ENCODE measurements at regions of chr7 and their contacts with region 1.

Region 1: DNA sequence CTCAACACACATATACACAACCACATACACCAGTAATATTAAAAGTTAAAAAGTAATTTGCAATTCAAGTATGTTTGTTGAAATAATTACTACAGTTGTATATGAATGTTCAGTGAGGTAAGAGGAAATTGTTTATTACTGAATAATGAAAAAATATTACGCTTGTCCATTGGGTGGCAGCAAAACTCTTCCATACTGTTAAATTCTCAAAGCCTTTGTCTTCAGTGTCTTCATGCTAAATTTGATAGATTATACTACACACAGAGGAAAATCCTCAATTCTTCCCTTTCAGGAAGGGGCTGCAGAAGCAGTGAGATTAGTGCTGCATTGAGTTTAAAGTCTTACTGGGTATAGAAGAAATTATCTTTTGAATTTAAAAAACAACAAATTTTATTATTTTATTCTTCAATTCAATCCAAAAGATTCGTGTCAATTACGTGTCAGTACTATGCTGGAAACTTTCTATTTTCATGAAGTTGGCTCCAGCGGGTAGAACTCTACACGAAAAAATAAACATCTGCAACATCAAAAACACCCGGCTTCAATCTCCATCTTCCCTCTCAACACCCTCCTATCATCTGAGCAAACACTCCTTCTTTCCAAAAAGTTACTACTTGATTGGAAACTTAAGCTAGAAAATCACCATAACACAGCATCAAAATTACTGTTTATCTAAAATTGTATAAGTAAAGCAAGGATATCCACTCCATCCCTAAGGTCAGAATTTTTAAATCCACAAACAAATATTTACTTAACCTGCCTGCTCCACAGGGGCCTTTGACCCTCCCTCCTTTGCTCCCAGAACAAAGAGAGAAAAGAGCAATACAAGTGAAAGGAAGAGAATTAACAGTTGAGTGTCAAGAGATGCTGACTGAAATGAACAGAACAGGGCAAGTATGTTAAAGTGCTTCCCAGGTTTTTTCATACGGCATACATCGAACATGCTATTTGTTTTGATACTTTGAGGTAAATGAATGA is 37.0 kb upstream of the TES start:
- DNase-seq: peak; percentile 78
- H3K4me3 Mint-ChIP-seq: no peak overlapping the region
- H3K27ac Mint-ChIP-seq: no peak overlapping the region
- H3K4me1 Mint-ChIP-seq: peaks cover 4% of the 10 kb centered on the region
- H3K27me3 Mint-ChIP-seq: peaks cover 28% of the 10 kb centered on the region

Region 2: GRCh38 chr7:115971506-115971905 is 201.8 kb before region 1 on chr7:
- intact Hi-C with region 1: no loop called
- DNase-seq: no peak
- H3K4me3 Mint-ChIP-seq: no peak overlapping the region
- H3K27ac Mint-ChIP-seq: no peak overlapping the region
- H3K4me1 Mint-ChIP-seq: no peaks in the 10 kb centered on the region
- H3K27me3 Mint-ChIP-seq: no peaks in the 10 kb centered on the region

Region 3: DNA sequence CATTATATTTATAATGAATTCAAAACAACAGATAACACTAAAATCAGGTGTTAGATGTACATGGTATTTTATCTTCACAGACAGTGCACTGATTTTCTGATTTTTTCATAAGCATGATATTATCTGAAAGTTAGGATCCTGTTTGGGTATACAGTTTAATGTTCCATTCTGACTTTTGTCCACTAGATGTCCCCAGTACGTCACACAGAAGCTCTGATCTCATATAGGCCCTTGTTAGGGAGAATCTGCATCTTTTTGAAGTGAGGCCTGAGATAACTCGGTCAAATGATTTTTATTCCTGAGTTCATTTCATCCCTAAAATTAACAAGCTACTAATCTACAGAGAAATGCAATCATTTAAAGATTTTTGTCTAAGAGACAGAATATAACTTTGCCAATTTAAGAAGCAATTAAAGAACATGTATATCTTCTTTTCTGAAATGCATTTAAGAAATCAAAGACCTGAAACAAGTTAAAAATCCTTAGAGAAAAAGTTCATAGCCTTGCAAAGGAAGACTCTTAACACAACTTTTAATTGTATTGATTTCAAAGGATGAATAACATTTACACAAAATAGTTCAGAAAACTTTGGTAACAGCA is 35.0 kb before region 1 on chr7:
- intact Hi-C with region 1: loop called (anchors 5 kb)
- DNase-seq: peak; percentile 80
- H3K4me3 Mint-ChIP-seq: no peak overlapping the region
- H3K27ac Mint-ChIP-seq: no peak overlapping the region
- H3K4me1 Mint-ChIP-seq: peaks cover 11% of the 10 kb centered on the region
- H3K27me3 Mint-ChIP-seq: peaks cover 16% of the 10 kb centered on the region

Region 4: DNA sequence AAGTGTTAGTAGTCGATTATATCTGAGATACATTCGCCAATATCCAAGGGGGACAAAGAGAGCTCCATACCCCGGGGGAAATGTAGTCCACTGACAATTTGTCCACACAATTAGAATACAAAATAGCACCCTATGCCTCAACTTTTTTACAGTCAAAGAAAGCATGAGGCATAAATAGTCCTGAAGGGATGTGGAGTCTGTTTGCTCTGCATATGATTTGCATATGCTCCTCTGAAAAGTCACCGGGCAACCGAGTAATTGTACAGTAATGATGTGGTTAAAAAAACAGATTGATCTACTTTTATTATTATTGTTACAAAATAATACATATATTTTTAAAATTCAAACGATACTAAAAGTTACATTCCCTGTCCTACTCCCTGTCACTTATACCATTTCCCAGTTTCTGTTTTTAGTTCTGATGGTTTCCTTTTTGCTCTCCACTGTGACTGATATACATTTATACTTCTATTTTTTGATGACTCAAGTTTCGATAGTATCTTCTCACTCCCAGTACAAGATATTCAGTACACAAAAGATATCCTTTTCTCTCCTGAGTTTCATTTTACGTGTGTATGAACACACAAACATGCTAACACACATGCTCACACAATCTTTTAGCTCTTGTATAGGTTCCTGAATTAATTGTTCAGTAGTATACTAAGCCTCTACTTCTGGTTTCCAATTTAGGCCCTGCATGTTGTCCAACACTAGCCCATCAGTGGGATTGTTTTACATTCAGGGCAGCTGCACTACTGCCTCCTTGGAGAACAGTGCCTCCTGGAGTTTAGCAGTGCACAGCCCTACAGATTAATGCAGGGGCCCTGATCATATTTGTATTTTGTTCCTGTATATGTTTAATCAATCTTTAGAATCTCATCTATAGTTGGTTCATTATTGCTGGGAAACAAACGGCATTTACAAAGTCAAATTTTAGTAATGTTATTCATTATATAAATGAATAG is 167.9 kb after region 1 on chr7:
- intact Hi-C with region 1: loop called (anchors 10 kb)
- DNase-seq: no peak
- H3K4me3 Mint-ChIP-seq: no peak overlapping the region
- H3K27ac Mint-ChIP-seq: no peak overlapping the region
- H3K4me1 Mint-ChIP-seq: no peaks in the 10 kb centered on the region
- H3K27me3 Mint-ChIP-seq: peaks cover 19% of the 10 kb centered on the region

Region 5: DNA sequence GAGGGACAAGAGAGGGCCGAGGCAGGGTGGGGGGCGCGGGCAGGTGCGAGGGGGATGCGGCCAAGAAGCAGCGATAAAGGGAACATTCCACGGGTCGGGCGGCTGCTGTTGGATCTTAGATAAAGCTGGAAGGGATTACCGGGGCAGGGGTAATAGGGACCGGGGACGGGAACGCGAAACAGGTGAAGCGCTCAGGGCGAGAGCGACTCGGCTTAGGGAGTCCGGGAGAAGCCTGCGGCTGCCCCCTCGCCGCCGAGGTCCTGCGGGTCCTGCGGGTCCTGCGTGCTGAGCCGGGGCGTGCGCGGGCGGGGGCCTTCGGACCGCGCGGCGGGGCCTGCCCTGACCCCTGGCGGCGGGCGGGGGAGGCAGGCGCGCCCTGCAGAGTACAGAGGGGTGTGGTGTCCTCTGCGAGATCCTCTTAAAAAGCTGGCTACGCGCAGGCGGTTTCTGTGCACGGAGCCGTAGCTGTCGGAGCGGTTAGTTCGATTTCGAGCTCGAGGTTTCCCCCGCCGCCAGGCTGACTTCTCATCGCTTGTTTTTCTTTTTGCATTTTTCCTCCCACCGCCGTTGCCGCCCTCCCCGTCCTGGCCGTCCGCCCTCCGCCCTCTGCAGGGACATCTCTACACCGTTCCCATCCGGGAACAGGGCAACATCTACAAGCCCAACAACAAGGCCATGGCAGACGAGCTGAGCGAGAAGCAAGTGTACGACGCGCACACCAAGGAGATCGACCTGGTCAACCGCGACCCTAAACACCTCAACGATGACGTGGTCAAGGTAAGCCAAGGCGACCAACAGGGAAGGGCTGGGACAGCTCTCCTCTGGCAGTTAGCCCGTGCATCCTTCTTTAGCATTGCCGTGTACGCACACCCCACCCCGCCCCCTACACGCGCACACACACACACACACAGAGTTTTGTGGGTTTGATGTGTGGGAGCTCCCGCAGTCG is 352.8 kb after region 1 on chr7:
- intact Hi-C with region 1: loop called (anchors 5 kb)
- DNase-seq: peak; percentile 89
- H3K4me3 Mint-ChIP-seq: peak overlapping the region; percentile 88
- H3K27ac Mint-ChIP-seq: peak overlapping the region; percentile 67
- H3K4me1 Mint-ChIP-seq: peaks cover 27% of the 10 kb centered on the region
- H3K27me3 Mint-ChIP-seq: peaks cover 81% of the 10 kb centered on the region

Region 6: GRCh38 chr7:116809636-116810266 is 636.4 kb after region 1 on chr7:
- intact Hi-C with region 1: loop called (anchors 2 kb)
- DNase-seq: peak; percentile 71
- H3K4me3 Mint-ChIP-seq: no peak overlapping the region
- H3K27ac Mint-ChIP-seq: no peak overlapping the region
- H3K4me1 Mint-ChIP-seq: no peaks in the 10 kb centered on the region
- H3K27me3 Mint-ChIP-seq: peaks cover 11% of the 10 kb centered on the region

Measured in activated CD4-positive, alpha-beta T cell treated with anti-CD3 and anti-CD28 coated beads, Interleukin-2, amount 10 ng/mL, durations not matched to agents 24 days and 14 days (primary cell).